ENCODE measurements at regions of chr2 and their contacts with region 1.

Region 1: GRCh38 chr2:36403675-36404230 is 48.2 kb downstream of the CRIM1 start:
- DNase-seq: peak; percentile 69 to 97
- ATAC-seq: peak; percentile 85 to 87
- H3K4me3 ChIP-seq: peak overlapping the region; percentile 30
- H3K27ac ChIP-seq: peak overlapping the region; percentile 88 to 92
- H3K4me1 ChIP-seq: peaks cover 98% of the 10 kb centered on the region
- CTCF ChIP-seq: no peak
- EP300 ChIP-seq: peak; percentile 97 to 98; a peak in 4 of 5 replicates
- POLR2A ChIP-seq: no peak
- RAD21 ChIP-seq: peak; percentile 20 to 57; a peak in 4 of 5 replicates

Region 2: DNA sequence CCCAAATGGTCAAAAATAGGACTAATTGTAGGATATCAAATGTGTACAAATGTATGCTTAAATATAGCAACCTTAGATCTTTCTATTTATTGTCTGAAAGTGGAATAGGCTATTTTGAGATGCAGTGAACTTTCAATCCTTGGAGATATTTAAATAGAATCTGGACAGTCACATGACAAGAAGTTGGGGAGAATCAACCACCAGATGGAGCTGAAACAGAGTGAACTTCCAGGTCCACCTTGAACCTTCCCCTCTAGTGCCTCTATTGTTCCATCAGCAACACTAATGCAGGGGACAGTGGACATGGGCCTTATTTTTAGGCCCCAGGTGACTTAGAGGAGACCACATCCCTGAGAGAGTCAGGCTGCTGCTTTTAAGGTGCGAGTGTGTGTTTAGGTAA is 85.2 kb before region 1 on chr2:
- CTCF ChIA-PET with region 1: no interaction called
- POLR2A ChIA-PET with region 1: no interaction called
- DNase-seq: peak in 1 of 2 experiments; percentile 22
- ATAC-seq: peak in 1 of 2 experiments; percentile 46; a peak in 1 of 6 replicates
- H3K4me3 ChIP-seq: no peak overlapping the region
- H3K27ac ChIP-seq: no peak overlapping the region
- H3K4me1 ChIP-seq: no peaks in the 10 kb centered on the region
- CTCF ChIP-seq: 0 out of 3 replicates have a peak, but pooled peaks have one; percentile 16
- EP300 ChIP-seq: no peak
- POLR2A ChIP-seq: no peak
- RAD21 ChIP-seq: peak in 1 of 2 experiments; percentile 23; a peak in 1 of 5 replicates

Region 3: DNA sequence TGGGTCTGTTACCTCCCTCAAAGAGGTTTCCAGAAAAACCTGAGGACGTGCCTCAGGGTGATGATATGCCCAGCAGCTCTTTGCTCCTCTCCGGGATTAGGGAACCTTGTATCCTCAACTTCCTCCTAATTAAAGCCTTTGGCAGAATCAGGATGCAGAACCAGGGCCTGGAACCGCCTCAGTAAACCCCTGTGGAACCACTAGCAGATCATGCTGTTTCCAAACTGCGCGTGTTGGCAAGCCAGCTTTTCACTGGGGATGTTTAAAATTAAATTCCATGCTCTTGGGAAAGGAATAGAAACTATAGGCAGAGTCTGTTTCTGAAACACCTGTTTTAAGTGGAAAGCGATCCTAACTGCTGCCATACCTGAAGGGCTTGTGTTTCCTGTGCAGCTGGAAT is 21.8 kb before region 1 on chr2:
- CTCF ChIA-PET with region 1: interaction called, 13 read pairs
- POLR2A ChIA-PET with region 1: no interaction called
- DNase-seq: no peak
- ATAC-seq: no peak
- H3K4me3 ChIP-seq: no peak overlapping the region
- H3K27ac ChIP-seq: peak overlapping the region; percentile 75 to 89
- H3K4me1 ChIP-seq: peaks cover 100% of the 10 kb centered on the region
- CTCF ChIP-seq: no peak
- EP300 ChIP-seq: no peak
- POLR2A ChIP-seq: no peak
- RAD21 ChIP-seq: no peak

Region 4: GRCh38 chr2:36544638-36545338 is 141.0 kb after region 1 on chr2:
- CTCF ChIA-PET with region 1: no interaction called
- POLR2A ChIA-PET with region 1: no interaction called
- DNase-seq: peak in 1 of 2 experiments; percentile 39
- ATAC-seq: peak in 1 of 2 experiments; percentile 43; a peak in 3 of 6 replicates
- H3K4me3 ChIP-seq: no peak overlapping the region
- H3K27ac ChIP-seq: no peak overlapping the region
- H3K4me1 ChIP-seq: peaks cover 16% of the 10 kb centered on the region
- CTCF ChIP-seq: peak; percentile 42
- EP300 ChIP-seq: no peak
- POLR2A ChIP-seq: no peak
- RAD21 ChIP-seq: peak in 1 of 2 experiments; percentile 44; a peak in 3 of 5 replicates